A673 (cell line): ENCODE measurements at regions of chr4 and their contacts with region 1.

Region 1: DNA sequence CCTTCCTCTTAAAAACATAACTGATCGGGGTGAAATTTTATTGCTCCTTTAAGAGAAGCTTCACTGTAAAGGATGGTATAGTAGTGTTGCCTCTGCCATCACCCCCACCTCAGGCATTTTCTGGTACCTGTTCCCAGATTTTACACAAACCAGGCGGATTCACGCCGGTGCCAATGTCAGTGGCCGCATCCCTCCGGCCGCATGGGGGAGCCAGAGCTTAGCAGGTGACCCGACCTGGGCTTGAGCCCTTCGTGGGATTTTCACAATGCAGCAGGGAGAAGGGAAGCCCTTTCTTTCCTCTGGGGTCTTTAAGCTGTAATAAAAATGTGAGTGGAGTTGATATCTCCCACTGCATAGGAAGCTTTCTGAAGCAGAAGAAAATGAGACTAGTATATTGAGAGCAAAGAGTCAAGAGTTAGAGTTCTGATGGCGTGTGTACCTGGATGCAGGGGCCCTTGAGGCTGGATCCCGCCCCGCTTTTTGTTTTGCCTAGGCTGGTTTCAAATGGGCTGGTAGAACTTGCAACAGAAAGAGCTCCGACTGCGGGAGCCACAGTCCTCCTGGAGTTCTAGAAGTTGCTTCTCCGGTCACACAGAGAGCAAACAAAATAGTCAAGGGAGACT is 59.4 kb downstream of the POLR2B start:
- DNase-seq: peak; percentile 48
- H3K4me3 ChIP-seq: no peak overlapping the region
- H3K27ac ChIP-seq: no peak overlapping the region
- H3K4me1 ChIP-seq: no peaks in the 10 kb centered on the region
- H3K27me3 ChIP-seq: no peaks in the 10 kb centered on the region
- CTCF ChIP-seq: peak; percentile 74

Region 2: GRCh38 chr4:57110640-57111511 is 72.8 kb after region 1 on chr4:
- CTCF ChIA-PET with region 1: no interaction called
- POLR2A ChIA-PET with region 1: no interaction called
- intact Hi-C with region 1: loop called (anchors 10 kb)
- DNase-seq: peak; percentile 67
- H3K4me3 ChIP-seq: peak overlapping the region; percentile 42
- H3K27ac ChIP-seq: no peak overlapping the region
- H3K4me1 ChIP-seq: no peaks in the 10 kb centered on the region
- H3K27me3 ChIP-seq: peaks cover 46% of the 10 kb centered on the region
- CTCF ChIP-seq: no peak

Region 3: GRCh38 chr4:57163530-57164459 is 125.7 kb after region 1 on chr4:
- CTCF ChIA-PET with region 1: interaction called, 3 read pairs
- POLR2A ChIA-PET with region 1: no interaction called
- intact Hi-C with region 1: loop called (anchors 1 kb)
- DNase-seq: peak; percentile 72
- H3K4me3 ChIP-seq: peak overlapping the region; percentile 43
- H3K27ac ChIP-seq: no peak overlapping the region
- H3K4me1 ChIP-seq: no peaks in the 10 kb centered on the region
- H3K27me3 ChIP-seq: peaks cover 3% of the 10 kb centered on the region
- CTCF ChIP-seq: peak; percentile 64